OCI-LY7 (cell line): ENCODE measurements at regions of chr7 and their contacts with region 1.

Region 1: DNA sequence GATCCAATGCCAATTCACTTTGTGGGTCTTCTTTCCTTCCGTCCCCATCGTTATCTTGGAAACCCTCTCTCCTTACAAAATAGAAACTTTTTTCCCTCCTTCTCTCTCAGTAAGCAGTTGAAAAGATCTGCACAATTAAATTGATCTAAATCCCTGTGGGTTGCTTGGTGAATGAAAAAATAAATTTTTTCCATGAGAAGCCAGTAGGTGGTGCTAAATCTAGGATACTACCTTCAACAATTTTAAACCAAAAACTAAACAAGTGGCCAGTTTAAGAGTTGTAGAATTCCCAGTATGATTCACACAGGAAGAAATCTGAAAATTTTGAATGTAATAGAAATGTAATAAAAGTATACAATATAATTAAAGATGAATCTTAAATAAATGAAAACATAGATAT is 990.3 kb upstream of the ZNF722 start:
- DNase-seq: no peak
- H3K4me3 ChIP-seq: no peak overlapping the region
- H3K27ac ChIP-seq: no peak overlapping the region
- H3K4me1 ChIP-seq: no peaks in the 10 kb centered on the region
- CTCF ChIP-seq: peak; percentile 70

Region 2: DNA sequence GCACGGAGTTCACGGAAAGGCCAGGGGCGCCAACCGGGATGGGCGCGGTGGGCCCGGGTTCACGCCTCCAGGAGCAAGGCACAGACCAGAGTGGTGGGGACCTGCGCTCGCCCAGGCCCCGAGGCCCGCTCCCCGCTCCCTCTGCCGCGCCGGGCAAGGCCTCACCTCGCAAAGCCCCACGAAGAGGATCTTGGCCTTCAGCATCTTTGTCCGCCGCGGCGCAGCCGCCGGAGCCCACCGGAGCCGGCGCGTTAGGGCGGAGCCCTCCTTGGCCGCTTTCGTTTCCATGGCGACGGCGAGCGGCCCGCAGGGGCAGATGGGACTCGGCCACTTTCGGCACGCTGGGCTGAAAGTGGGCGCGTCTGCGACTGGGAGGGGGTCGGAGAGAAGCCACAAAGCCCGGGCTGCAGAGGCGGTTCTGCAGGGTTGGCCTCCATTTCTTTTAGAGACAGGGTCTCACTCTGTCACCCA is 45.9 kb after region 1 on chr7:
- CTCF ChIA-PET with region 1: no interaction called
- POLR2A ChIA-PET with region 1: no interaction called
- intact Hi-C with region 1: loop called (anchors 10 kb)
- DNase-seq: no peak
- H3K4me3 ChIP-seq: no peak overlapping the region
- H3K27ac ChIP-seq: no peak overlapping the region
- H3K4me1 ChIP-seq: no peaks in the 10 kb centered on the region
- CTCF ChIP-seq: no peak

Region 3: DNA sequence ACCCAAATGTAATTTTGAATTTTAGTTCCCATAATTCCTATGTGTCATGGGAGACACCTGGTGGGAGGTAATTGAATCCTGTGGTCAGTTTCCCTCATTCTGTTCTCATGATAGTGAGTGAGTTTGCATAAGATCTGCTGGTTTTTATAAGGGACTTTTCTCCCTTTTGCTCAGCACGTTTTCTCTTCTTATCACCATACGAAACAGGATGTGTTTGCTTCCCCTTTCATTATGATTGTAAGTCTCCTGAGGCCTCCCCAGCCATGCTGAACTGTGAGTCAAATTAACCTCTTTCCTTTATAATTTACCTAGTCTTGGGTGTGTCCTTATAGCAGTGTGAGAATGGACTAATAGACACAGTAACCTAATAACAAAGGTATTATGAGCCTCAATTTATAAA is 1269.3 kb after region 1 on chr7:
- CTCF ChIA-PET with region 1: no interaction called
- POLR2A ChIA-PET with region 1: no interaction called
- intact Hi-C with region 1: loop called (anchors 10 kb)
- DNase-seq: no peak
- H3K4me3 ChIP-seq: no peak overlapping the region
- H3K27ac ChIP-seq: no peak overlapping the region
- H3K4me1 ChIP-seq: no peaks in the 10 kb centered on the region
- CTCF ChIP-seq: no peak